HEK293 (cell line): ENCODE measurements at regions of chr3 and their contacts with region 1.

Region 1: GRCh38 chr3:107794664-107795443 is 272.1 kb downstream of the BBX start:
- H3K4me3 ChIP-seq: no peak overlapping the region
- H3K27ac ChIP-seq: no peak overlapping the region
- H3K4me1 ChIP-seq: no peaks in the 10 kb centered on the region
- CTCF ChIP-seq: no peak

Region 2: GRCh38 chr3:107928084-107928445 is 133.2 kb after region 1 on chr3:
- CTCF ChIA-PET with region 1: interaction called, 11 read pairs
- POLR2A ChIA-PET with region 1: no interaction called
- H3K4me3 ChIP-seq: peak overlapping the region; percentile 49
- H3K27ac ChIP-seq: peak overlapping the region; percentile 20; the same call in 1 of the 2 replicates
- H3K4me1 ChIP-seq: no peaks in the 10 kb centered on the region
- CTCF ChIP-seq: no peak